PC-3 (cell line): ENCODE measurements at regions of chr9 and their contacts with region 1.

Region 1: GRCh38 chr9:105425841-105426436 is 21.9 kb upstream of the FSD1L start:
- DNase-seq: peak; percentile 50
- ATAC-seq: peak; percentile 71
- H3K4me3 ChIP-seq: no peak overlapping the region
- H3K27ac ChIP-seq: no peak overlapping the region
- H3K4me1 ChIP-seq: no peaks in the 10 kb centered on the region
- H3K27me3 ChIP-seq: no peaks in the 10 kb centered on the region
- CTCF ChIP-seq: peak; percentile 63

Region 2: GRCh38 chr9:105475302-105475701 is 49.4 kb after region 1 on chr9:
- CTCF ChIA-PET with region 1: no interaction called
- POLR2A ChIA-PET with region 1: no interaction called
- intact Hi-C with region 1: loop called (anchors 1 kb)
- DNase-seq: peak; percentile 30
- ATAC-seq: peak; percentile 64
- H3K4me3 ChIP-seq: no peak overlapping the region
- H3K27ac ChIP-seq: no peak overlapping the region
- H3K4me1 ChIP-seq: no peaks in the 10 kb centered on the region
- H3K27me3 ChIP-seq: no peaks in the 10 kb centered on the region
- CTCF ChIP-seq: peak; percentile 55

Region 3: GRCh38 chr9:105557771-105558610 is 132.1 kb after region 1 on chr9 and contains the start of gene FKTN:
- CTCF ChIA-PET with region 1: no interaction called
- POLR2A ChIA-PET with region 1: no interaction called
- intact Hi-C with region 1: loop called (anchors 10 kb)
- DNase-seq: peak; percentile 79
- ATAC-seq: peak; percentile 93
- H3K4me3 ChIP-seq: peak within 1 kb of the TSS; percentile 98
- H3K27ac ChIP-seq: no peak within 1 kb of the TSS
- H3K4me1 ChIP-seq: peaks cover 6% of the 10 kb centered on the region
- H3K27me3 ChIP-seq: no peaks in the 10 kb centered on the region
- CTCF ChIP-seq: no peak
- total RNA-seq, gene FKTN: 9.0 and 9.2 TPM in 2 replicates